Dorsolateral prefrontal cortex (tissue), 120 donors: ENCODE measurements at regions of chr17 and their contacts with region 1.

Region 1: DNA sequence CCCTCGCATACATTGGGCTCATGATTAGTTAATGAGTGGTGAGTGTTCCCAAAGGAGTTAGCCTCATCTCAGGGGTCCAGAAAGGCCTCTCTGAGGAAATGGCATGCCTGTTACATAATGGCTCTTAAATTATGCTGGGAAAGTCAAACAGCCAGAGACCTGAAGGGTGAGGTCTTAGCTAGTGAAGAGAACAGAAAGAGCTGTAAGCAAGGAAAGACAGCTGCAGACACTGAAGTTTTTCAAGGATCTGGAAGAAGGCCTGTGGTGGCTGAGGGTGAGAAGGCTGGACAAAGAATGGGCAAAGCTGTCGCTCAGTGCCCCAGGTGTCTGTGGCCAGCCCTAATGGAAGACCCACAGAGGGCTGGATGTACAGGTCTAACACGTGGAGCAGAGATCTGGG is 10.4 kb downstream of the SP2 start:
- DNase-seq: peak in 1 of 10 donors; percentile 36
- H3K4me3 ChIP-seq: no peak overlapping the region
- H3K27ac ChIP-seq: peak overlapping the region in 57 of 59 donors; percentile 4 to 95 (median 85)
- H3K27me3 ChIP-seq: no peaks in the 10 kb centered on the region
- CTCF ChIP-seq: no peak

Region 2: GRCh38 chr17:47850692-47851573 is 55.5 kb before region 1 on chr17 and contains the start of gene SP6:
- intact Hi-C with region 1: no loop called
- DNase-seq: peak in 2 of 10 donors; percentile 15 to 63
- H3K4me3 ChIP-seq: peak within 1 kb of the TSS in 25 of 59 donors; percentile 1 to 51 (median 32)
- H3K27ac ChIP-seq: no peak within 1 kb of the TSS
- H3K27me3 ChIP-seq: peaks cover 21 to 100% (median 95%) of the 10 kb centered on the region in 45 donors
- CTCF ChIP-seq: no peak
- total RNA-seq, gene SP6: 0.10 to 0.62 (median 0.24) TPM in 85 of 120 experiments, not detected in the others

Region 3: DNA sequence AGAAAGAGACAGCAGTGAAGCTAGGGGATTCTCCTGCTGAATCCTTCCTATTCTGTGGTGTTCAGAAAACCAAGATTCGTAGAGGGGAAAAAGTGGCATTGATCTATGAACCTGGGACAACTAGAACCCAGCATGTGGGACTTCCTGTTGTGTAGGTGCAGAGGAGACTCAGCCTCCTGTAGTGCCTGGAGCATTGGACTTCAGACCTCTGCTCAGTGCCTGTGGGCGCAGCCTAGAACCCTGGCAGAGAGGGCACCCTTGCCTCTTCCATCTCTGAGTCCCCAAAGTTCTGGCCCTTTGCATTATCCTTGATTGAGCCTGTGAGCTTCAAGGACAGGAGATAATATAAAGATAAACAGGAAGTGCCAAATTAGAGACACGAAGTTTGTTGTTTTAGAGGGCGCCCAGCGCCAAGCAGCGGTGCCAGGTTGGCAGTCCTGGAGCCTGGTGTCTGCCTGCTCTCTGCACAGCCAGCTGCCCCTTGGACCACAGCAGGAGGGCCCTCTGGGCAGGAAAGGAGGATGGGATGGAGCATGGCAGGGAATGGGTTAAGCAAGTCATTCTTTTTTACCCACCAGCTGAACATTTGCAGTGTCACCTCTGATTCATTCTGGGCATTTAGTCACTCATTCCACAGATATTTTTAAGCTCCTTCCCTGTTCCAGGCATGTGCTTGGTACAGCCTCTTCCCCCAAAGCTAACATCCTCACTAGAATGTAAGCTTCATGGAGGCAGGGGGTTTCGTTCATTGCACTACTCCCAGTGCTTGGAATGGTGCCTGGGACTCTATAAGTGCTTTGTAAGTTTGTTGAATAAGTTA is 43.6 kb before region 1 on chr17:
- intact Hi-C with region 1: loop called in 1 of 2 experiments (anchors 1 kb)
- DNase-seq: no peak
- H3K4me3 ChIP-seq: no peak overlapping the region
- H3K27ac ChIP-seq: no peak overlapping the region
- H3K27me3 ChIP-seq: peaks cover 0 to 44% (median 13%) of the 10 kb centered on the region in 45 donors
- CTCF ChIP-seq: no peak

Region 4: GRCh38 chr17:47970704-47971463 is 64.4 kb after region 1 on chr17 and contains the start of gene CDK5RAP3:
- intact Hi-C with region 1: no loop called
- DNase-seq: peak; percentile 99 to 100 (median 100)
- H3K4me3 ChIP-seq: peak within 1 kb of the TSS; percentile 66 to 99 (median 92)
- H3K27ac ChIP-seq: peak within 1 kb of the TSS in 57 of 59 donors; percentile 29 to 92 (median 79)
- H3K27me3 ChIP-seq: no peaks in the 10 kb centered on the region
- CTCF ChIP-seq: peak; percentile 92 to 100 (median 98)
- total RNA-seq, gene CDK5RAP3: 99.4 to 256 (median 180) TPM

Region 5: DNA sequence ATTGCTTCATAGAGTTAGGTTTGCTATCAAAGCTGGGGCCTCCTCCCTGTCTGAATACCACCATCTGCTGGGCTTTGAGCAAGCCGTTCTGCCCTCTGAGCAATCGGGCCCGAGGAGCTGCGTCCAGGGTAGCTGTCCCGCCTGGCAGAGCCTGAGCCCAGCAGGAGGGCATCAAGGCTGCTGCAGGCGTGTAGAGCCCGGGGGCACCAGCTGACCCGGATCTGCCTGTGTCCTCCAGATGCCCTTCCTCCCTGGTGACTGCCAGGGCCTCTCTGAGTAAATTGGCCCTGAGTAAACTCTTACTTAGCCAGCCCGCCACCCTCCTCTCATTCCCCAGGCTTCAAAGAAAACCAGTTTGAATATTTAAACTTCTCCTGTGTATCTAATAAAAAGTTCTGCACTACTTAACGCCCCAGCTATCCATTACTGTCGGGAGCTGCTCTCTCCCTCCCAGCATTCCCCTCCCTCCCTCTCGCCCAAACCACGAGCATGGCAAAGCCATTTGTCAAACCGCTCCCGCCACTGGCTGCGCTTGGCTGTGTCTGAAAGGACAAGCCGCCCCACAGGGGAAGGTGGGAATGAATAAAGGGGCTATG is 80.9 kb after region 1 on chr17:
- intact Hi-C with region 1: no loop called
- DNase-seq: peak in 1 of 10 donors; percentile 41
- H3K4me3 ChIP-seq: peak overlapping the region in 1 of 59 donors; percentile 1
- H3K27ac ChIP-seq: peak overlapping the region in 12 of 59 donors; percentile 2 to 58 (median 28)
- H3K27me3 ChIP-seq: no peaks in the 10 kb centered on the region
- CTCF ChIP-seq: no peak